Head of caudate nucleus (tissue), 42 donors: ENCODE measurements at regions of chr1 and their contacts with region 1.

Region 1: GRCh38 chr1:115976062-115976920 is at the start of gene SLC22A15:
- DNase-seq: peak in 41 of 42 donors; percentile 34 to 86 (median 70)

Region 2: DNA sequence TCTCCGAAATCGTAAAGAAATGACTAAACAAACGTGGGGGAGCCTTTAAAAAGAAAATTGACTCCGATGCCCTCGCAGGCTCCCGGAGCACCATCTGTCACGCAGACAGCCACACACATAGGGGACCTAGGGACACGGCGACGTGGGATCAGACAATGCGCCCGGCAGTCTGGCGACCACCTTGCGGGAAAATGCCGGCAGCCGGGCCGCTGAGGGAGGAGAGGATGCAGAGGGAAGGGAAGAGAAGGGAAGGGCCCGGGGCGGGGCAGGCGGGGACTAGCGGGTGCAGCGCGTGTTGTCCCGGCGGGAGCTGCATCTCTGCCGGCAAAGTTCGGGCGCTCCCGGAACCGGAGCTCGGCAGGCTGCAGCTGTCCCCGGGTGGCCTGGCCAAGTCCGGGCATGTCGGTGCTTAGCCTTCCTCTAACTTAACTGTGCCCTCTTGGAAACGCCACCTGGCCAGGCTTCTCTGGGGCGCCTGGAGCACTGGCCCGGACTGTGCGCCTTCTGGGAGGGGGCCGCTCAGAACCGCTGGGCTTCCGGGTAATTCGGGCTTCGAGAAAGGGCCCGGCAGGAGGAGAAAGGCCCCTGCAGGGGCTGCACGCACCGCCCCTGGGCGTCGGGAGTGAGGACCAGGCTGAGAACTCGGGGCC is 137.1 kb before region 1 on chr1:
- intact Hi-C with region 1: loop called (anchors 5 kb)
- DNase-seq: peak in 40 of 42 donors; percentile 36 to 86 (median 64)